ENCODE measurements at regions of chr17 and their contacts with region 1.

Region 1: GRCh38 chr17:17496189-17497064 is at the start of gene RASD1:
- DNase-seq: peak; percentile 89 to 94
- ATAC-seq: peak; percentile 88 to 95 (median 92)
- H3K4me3 ChIP-seq: peak within 1 kb of the TSS; percentile 38 to 75 (median 66)
- H3K27ac ChIP-seq: peak within 1 kb of the TSS; percentile 83 to 97 (median 90)
- H3K4me1 ChIP-seq: peaks cover 9 to 54% (median 41%) of the 10 kb centered on the region in 9 donors
- H3K27me3 ChIP-seq: peaks cover 0 to 22% (median 0%) of the 10 kb centered on the region in 7 donors
- CTCF ChIP-seq: peak; percentile 93 to 100 (median 98)
- total RNA-seq, gene RASD1: 2.2 to 67.7 (median 6.8) TPM

Region 2: GRCh38 chr17:17356149-17356930 is 140.1 kb before region 1 on chr17:
- intact Hi-C with region 1: loop called (anchors 2 to 10 kb)
- DNase-seq: peak; percentile 73 to 79
- ATAC-seq: peak; percentile 63 to 90 (median 77)
- H3K4me3 ChIP-seq: no peak overlapping the region
- H3K27ac ChIP-seq: no peak overlapping the region
- H3K4me1 ChIP-seq: peaks cover 9 to 26% (median 16%) of the 10 kb centered on the region in 9 donors
- H3K27me3 ChIP-seq: no peaks in the 10 kb centered on the region
- CTCF ChIP-seq: peak in 8 of 9 donors; percentile 93 to 100 (median 99)

Region 3: DNA sequence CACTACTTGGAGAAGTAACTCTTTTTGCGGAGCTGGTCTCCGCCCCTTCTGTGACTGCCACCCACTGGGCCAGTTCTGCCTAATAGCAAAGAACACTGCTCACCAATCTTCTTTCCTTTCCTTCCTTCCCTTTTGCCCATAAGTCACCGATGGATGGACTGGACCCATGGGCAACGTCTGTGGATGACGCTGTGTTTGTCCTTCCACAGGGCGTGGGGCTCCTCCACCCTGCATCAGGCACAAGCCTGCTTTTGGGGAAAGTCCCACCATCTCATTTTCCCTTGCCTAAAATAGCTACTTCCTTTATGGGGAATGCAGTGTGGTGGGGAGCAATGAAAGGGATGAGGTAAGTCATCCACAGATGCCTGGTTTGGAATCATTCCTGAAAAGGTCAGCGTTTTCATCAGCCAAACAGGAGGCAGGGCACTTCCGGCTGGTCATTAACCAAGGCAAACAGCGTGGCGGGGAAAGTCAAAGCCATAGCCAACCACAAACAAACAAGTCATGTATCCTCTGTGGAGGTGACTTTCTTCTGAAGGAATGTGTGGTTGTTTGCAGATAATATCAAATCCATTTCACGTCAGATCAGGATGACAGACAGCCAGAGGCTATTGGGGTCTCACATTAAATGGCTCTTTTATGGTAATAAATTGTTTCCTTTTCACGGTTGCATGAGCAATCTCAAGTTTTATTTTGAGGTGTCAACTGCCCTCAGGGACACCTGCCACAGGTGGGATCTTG is 50.3 kb before region 1 on chr17:
- intact Hi-C with region 1: no loop called
- DNase-seq: peak in 1 of 2 donors; percentile 27
- ATAC-seq: peak; percentile 46 to 71 (median 56)
- H3K4me3 ChIP-seq: no peak overlapping the region
- H3K27ac ChIP-seq: peak overlapping the region in 1 of 10 donors; percentile 13
- H3K4me1 ChIP-seq: peaks cover 0 to 16% (median 14%) of the 10 kb centered on the region in 9 donors
- H3K27me3 ChIP-seq: no peaks in the 10 kb centered on the region
- CTCF ChIP-seq: no peak

Region 4: GRCh38 chr17:17476865-17477467 is 19.5 kb before region 1 on chr17 and contains the start of gene MED9:
- intact Hi-C with region 1: loop called in 2 of 10 experiments (anchors 2 kb)
- DNase-seq: peak; percentile 95 to 96
- ATAC-seq: peak; percentile 98 to 99 (median 98)
- H3K4me3 ChIP-seq: peak within 1 kb of the TSS; percentile 79 to 99 (median 94)
- H3K27ac ChIP-seq: peak within 1 kb of the TSS; percentile 93 to 100 (median 97)
- H3K4me1 ChIP-seq: peaks cover 9 to 54% (median 46%) of the 10 kb centered on the region in 9 donors
- H3K27me3 ChIP-seq: no peaks in the 10 kb centered on the region
- CTCF ChIP-seq: no peak
- total RNA-seq, gene MED9: 31.4 to 42.0 (median 35.2) TPM

Region 5: GRCh38 chr17:17568749-17569195 is 72.3 kb after region 1 on chr17:
- intact Hi-C with region 1: loop called in 9 of 10 experiments (anchors 1 to 5 kb)
- DNase-seq: peak; percentile 68 to 85
- ATAC-seq: peak in 7 of 8 donors; percentile 15 to 75 (median 44)
- H3K4me3 ChIP-seq: no peak overlapping the region
- H3K27ac ChIP-seq: peak overlapping the region in 9 of 10 donors; percentile 20 to 96 (median 66)
- H3K4me1 ChIP-seq: peaks cover 34 to 69% (median 52%) of the 10 kb centered on the region in 9 donors
- H3K27me3 ChIP-seq: no peaks in the 10 kb centered on the region
- CTCF ChIP-seq: peak; percentile 46 to 79 (median 71)

Region 6: GRCh38 chr17:17591355-17592298 is 95.2 kb after region 1 on chr17 and contains the start of gene PEMT:
- intact Hi-C with region 1: no loop called
- DNase-seq: peak; percentile 92 to 97
- ATAC-seq: peak; percentile 97 to 99 (median 99)
- H3K4me3 ChIP-seq: peak within 1 kb of the TSS; percentile 64 to 97 (median 84)
- H3K27ac ChIP-seq: peak within 1 kb of the TSS; percentile 64 to 94 (median 90)
- H3K4me1 ChIP-seq: peaks cover 8 to 26% (median 21%) of the 10 kb centered on the region in 9 donors
- H3K27me3 ChIP-seq: no peaks in the 10 kb centered on the region
- CTCF ChIP-seq: peak in 1 of 9 donors; percentile 9
- total RNA-seq, gene PEMT: 13.5 to 26.7 (median 21.1) TPM

Region 7: DNA sequence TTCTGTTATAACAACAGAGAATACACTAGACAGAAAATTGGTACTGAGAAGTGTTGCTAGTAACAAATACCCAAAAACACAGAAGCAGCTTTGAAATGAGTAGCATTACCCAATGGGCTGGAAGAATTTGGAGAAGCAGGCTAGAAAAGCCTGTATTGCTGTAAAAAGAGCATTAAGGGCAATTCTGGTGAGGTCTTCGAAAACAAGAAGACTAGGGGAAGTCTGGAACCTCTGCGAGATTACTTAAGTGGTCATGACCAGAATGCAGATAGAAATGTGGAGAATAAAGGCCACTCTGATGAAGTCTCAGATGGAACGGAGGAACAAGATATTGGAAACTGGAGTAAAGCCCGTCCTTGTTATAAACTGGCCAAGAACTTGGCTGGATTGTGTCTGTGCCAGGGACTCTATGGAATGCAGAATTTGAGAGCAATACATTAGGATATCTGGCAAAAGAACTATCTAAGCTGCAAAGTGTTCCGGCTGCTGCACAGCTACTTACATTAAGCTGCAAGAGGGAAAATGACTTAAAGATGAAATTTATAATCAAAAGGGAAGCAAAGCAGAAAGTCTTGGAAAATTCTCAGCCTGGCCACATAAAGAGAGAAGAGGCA is 140.0 kb after region 1 on chr17:
- intact Hi-C with region 1: loop called in 7 of 10 experiments (anchors 2 to 10 kb)
- DNase-seq: no peak
- ATAC-seq: no peak
- H3K4me3 ChIP-seq: no peak overlapping the region
- H3K27ac ChIP-seq: no peak overlapping the region
- H3K4me1 ChIP-seq: peaks cover 0 to 14% (median 0%) of the 10 kb centered on the region in 9 donors
- H3K27me3 ChIP-seq: no peaks in the 10 kb centered on the region
- CTCF ChIP-seq: no peak

Measured in heart right ventricle (tissue), 16 donors.